ENCODE measurements at regions of chr12 and their contacts with region 1.

Region 1: GRCh38 chr12:66169221-66170170 is at the start of gene TMBIM4:
- DNase-seq: peak; percentile 94
- ATAC-seq: peak; percentile 83
- H3K4me3 ChIP-seq: peak within 1 kb of the TSS; percentile 73 to 99 (median 91)
- H3K4me3 Mint-ChIP-seq: peak within 1 kb of the TSS; percentile 89
- H3K27ac ChIP-seq: peak within 1 kb of the TSS; percentile 97
- H3K27ac Mint-ChIP-seq: peak within 1 kb of the TSS; percentile 93
- H3K4me1 ChIP-seq: peaks cover 21 to 30% of the 10 kb centered on the region in 2 donors
- H3K4me1 Mint-ChIP-seq: peaks cover 42% of the 10 kb centered on the region
- H3K27me3 ChIP-seq: no peaks in the 10 kb centered on the region
- H3K27me3 Mint-ChIP-seq: no peaks in the 10 kb centered on the region
- CTCF ChIP-seq: peak; percentile 40
- total RNA-seq, gene TMBIM4: 85.6 and 88.1 TPM in 2 replicates

Region 2: GRCh38 chr12:66301944-66302826 is 132.7 kb after region 1 on chr12 and contains the start of gene HELB:
- CTCF ChIA-PET with region 1: interaction called, 7 read pairs
- POLR2A ChIA-PET with region 1: interaction called, 12 read pairs
- intact Hi-C with region 1: loop called (anchors 1 kb)
- DNase-seq: peak; percentile 92
- ATAC-seq: peak; percentile 95
- H3K4me3 ChIP-seq: peak within 1 kb of the TSS; percentile 69 to 99 (median 92)
- H3K4me3 Mint-ChIP-seq: peak within 1 kb of the TSS; percentile 99
- H3K27ac ChIP-seq: peak within 1 kb of the TSS; percentile 68
- H3K27ac Mint-ChIP-seq: peak within 1 kb of the TSS; percentile 94
- H3K4me1 ChIP-seq: peaks cover 10 to 15% of the 10 kb centered on the region in 2 donors
- H3K4me1 Mint-ChIP-seq: peaks cover 36% of the 10 kb centered on the region
- H3K27me3 ChIP-seq: no peaks in the 10 kb centered on the region
- H3K27me3 Mint-ChIP-seq: peaks cover 4% of the 10 kb centered on the region
- CTCF ChIP-seq: no peak
- total RNA-seq, gene HELB: 10.0 and 11.8 TPM in 2 replicates